IMR-90 (cell line): ENCODE measurements at regions of chr6 and their contacts with region 1.

Region 1: GRCh38 chr6:130843575-130844320 is 16.5 kb downstream of the SMLR1 start:
- DNase-seq: peak; percentile 33
- ATAC-seq: peak; percentile 56; the same call in 1 of the 2 replicates
- H3K4me3 ChIP-seq: no peak overlapping the region
- H3K27ac ChIP-seq: no peak overlapping the region
- H3K4me1 ChIP-seq: peaks cover 6% of the 10 kb centered on the region
- H3K27me3 ChIP-seq: no peaks in the 10 kb centered on the region
- CTCF ChIP-seq: peak; percentile 52
- POLR2A ChIP-seq: no peak
- RAD21 ChIP-seq: peak; percentile 64

Region 2: GRCh38 chr6:130313206-130313605 is 530.5 kb before region 1 on chr6:
- CTCF ChIA-PET with region 1: no interaction called
- POLR2A ChIA-PET with region 1: no interaction called
- dilution Hi-C with region 1: no loop called
- in situ Hi-C with region 1: loop called (anchors 10 kb)
- intact Hi-C with region 1: no loop called
- DNase-seq: no peak
- ATAC-seq: no peak
- H3K4me3 ChIP-seq: no peak overlapping the region
- H3K27ac ChIP-seq: no peak overlapping the region
- H3K4me1 ChIP-seq: no peaks in the 10 kb centered on the region
- H3K27me3 ChIP-seq: no peaks in the 10 kb centered on the region
- CTCF ChIP-seq: no peak
- POLR2A ChIP-seq: no peak
- RAD21 ChIP-seq: no peak

Region 3: GRCh38 chr6:130797061-130797460 is 46.7 kb before region 1 on chr6:
- CTCF ChIA-PET with region 1: no interaction called
- POLR2A ChIA-PET with region 1: no interaction called
- dilution Hi-C with region 1: no loop called
- in situ Hi-C with region 1: no loop called
- intact Hi-C with region 1: no loop called
- DNase-seq: no peak
- ATAC-seq: no peak
- H3K4me3 ChIP-seq: no peak overlapping the region
- H3K27ac ChIP-seq: no peak overlapping the region
- H3K4me1 ChIP-seq: no peaks in the 10 kb centered on the region
- H3K27me3 ChIP-seq: peaks cover 5% of the 10 kb centered on the region
- CTCF ChIP-seq: no peak
- POLR2A ChIP-seq: no peak
- RAD21 ChIP-seq: no peak

Region 4: GRCh38 chr6:131042664-131043063 is 198.9 kb after region 1 on chr6:
- CTCF ChIA-PET with region 1: no interaction called
- POLR2A ChIA-PET with region 1: no interaction called
- dilution Hi-C with region 1: no loop called
- in situ Hi-C with region 1: no loop called
- intact Hi-C with region 1: no loop called
- DNase-seq: no peak
- ATAC-seq: no peak
- H3K4me3 ChIP-seq: no peak overlapping the region
- H3K27ac ChIP-seq: no peak overlapping the region; the same call in 1 of the 2 replicates
- H3K4me1 ChIP-seq: peaks cover 14% of the 10 kb centered on the region
- H3K27me3 ChIP-seq: no peaks in the 10 kb centered on the region
- CTCF ChIP-seq: no peak
- POLR2A ChIP-seq: no peak
- RAD21 ChIP-seq: no peak